Naive thymus-derived CD8-positive, alpha-beta T cell (primary cell): ENCODE measurements at regions of chr4 and their contacts with region 1.

Region 1: GRCh38 chr4:6709230-6710114 is at the start of gene MRFAP1L1:
- DNase-seq: peak; percentile 95 to 98 (median 97)
- ATAC-seq: peak; percentile 82 to 87
- H3K4me3 Mint-ChIP-seq: peak within 1 kb of the TSS; percentile 97 to 100 (median 99)
- H3K27ac Mint-ChIP-seq: peak within 1 kb of the TSS; percentile 95 to 100 (median 99)
- H3K4me1 Mint-ChIP-seq: peaks cover 37 to 71% (median 66%) of the 10 kb centered on the region in 4 donors
- H3K27me3 Mint-ChIP-seq: no peaks in the 10 kb centered on the region
- polyA plus RNA-seq, gene MRFAP1L1: 102 to 124 (median 105) TPM

Region 2: DNA sequence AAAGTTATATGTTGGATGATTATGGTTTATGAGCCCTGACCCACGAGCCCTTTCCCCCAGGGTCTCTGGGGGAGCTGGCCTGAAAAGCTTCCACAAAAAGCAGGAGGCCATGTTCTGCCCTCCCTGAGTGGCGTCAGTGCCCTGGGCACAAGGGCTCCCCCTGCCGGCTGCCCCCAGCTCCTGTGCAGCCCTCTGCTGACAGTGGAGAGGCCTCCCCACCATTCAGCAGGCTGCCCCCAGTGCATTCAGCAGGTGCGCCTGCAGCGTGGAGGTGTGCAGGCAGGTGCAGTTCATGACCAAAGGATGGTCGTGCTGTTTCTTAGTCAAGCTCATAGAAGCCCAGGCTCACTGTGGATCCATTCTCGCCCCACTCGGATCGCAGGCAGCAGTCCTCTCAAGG is 28.3 kb before region 1 on chr4:
- POLR2A ChIA-PET with region 1: interaction called, 437 read pairs
- DNase-seq: no peak
- ATAC-seq: no peak
- H3K4me3 Mint-ChIP-seq: no peak overlapping the region
- H3K27ac Mint-ChIP-seq: peak overlapping the region in 5 of 10 donors; percentile 38 to 83 (median 63)
- H3K4me1 Mint-ChIP-seq: peaks cover 18 to 58% (median 38%) of the 10 kb centered on the region in 4 donors
- H3K27me3 Mint-ChIP-seq: no peaks in the 10 kb centered on the region

Region 3: GRCh38 chr4:6688879-6689505 is 20.5 kb before region 1 on chr4:
- POLR2A ChIA-PET with region 1: interaction called, 103 read pairs
- DNase-seq: peak; percentile 39 to 86 (median 60)
- ATAC-seq: peak; percentile 76 to 90
- H3K4me3 Mint-ChIP-seq: peak overlapping the region; percentile 73 to 95 (median 84)
- H3K27ac Mint-ChIP-seq: peak overlapping the region; percentile 88 to 99 (median 97)
- H3K4me1 Mint-ChIP-seq: peaks cover 39 to 78% (median 70%) of the 10 kb centered on the region in 4 donors
- H3K27me3 Mint-ChIP-seq: no peaks in the 10 kb centered on the region

Region 4: DNA sequence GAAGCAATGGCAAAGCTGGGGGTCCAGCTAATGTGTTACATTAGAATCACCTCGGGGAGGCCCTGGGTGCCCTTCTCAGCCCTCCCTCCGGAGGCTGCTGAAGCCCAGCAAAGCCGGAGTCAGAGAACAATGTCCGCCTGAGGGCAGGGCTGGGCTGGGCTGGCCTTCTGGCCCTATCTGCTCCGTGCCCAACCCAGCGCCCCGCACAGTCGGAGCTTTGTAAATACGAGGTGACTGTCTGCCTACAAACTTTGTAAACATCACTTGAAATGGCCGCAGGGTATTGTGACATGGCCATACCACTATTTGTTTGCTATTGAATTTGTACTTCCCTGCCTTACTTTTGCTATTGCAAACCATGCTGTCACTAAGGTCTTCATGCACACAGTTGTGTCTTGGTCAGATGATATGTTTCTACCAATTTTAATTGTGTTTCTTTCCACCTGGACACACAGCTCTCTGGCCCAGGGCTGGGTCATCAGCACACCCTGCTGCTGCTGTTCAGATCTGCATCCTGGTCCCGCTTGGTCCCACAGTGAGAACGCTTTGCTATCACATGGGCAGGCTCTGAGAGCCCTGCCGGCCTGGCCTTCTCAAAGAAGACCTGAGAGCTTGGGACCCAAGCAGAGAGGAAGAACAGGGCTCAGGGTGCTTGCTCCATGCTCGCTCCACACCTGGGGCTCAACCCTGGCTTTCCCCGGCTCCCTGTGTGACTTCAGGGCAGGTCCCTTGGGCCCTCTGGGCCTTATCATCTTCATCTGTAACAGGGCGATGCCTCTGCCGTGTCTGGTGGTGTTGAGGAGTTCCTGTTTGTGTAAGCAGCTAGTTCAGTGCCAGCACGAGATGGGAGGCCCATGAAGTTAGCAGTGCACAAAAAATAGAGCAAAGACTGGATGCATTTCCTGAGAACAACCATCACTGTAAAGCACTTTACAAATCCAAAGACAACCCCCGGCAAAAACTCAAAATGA is 13.5 kb before region 1 on chr4:
- POLR2A ChIA-PET with region 1: interaction called, 103 read pairs
- DNase-seq: peak in 9 of 10 donors; percentile 27 to 81 (median 55)
- ATAC-seq: peak; percentile 86 to 90
- H3K4me3 Mint-ChIP-seq: peak overlapping the region; percentile 40 to 85 (median 74)
- H3K27ac Mint-ChIP-seq: peak overlapping the region; percentile 90 to 98 (median 94)
- H3K4me1 Mint-ChIP-seq: peaks cover 49 to 87% (median 82%) of the 10 kb centered on the region in 4 donors
- H3K27me3 Mint-ChIP-seq: no peaks in the 10 kb centered on the region

Region 5: DNA sequence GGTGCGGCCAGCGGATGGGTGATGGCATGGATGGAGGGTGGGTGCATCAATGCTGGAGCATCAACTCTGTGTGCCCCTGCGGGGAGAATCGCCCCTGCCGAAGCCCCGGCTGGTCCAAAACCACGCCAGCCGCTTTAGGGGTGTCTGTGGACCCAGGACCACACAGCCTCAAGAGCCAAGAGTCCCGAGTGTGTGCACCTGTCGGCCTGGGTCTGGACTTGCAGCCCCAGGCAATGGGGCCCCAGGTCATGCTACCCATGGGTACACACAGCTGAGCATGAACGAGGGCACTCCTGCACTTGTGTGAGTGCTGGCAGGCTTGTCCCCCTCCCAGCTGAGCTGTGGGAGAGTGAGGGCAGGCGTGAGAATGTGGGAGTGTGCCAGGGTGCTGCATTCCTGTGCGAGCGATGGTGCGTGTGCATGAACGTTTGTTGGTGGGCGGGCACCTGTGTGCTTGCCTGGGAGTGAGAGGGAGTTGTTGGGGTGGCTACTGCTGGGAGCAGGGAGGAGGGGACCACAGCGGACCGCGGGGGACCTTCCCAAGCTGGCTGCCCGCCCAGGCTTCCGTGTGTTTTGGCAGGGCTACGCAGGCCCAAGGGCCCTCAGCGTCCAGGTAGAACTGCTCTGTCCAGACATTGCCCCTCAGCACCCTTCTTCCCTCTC is 37.3 kb after region 1 on chr4:
- POLR2A ChIA-PET with region 1: no interaction called
- DNase-seq: no peak
- ATAC-seq: no peak
- H3K4me3 Mint-ChIP-seq: no peak overlapping the region
- H3K27ac Mint-ChIP-seq: peak overlapping the region in 3 of 10 donors; percentile 34 to 53 (median 48)
- H3K4me1 Mint-ChIP-seq: peaks cover 2 to 14% (median 9%) of the 10 kb centered on the region in 4 donors
- H3K27me3 Mint-ChIP-seq: peaks cover 0 to 1% (median 0%) of the 10 kb centered on the region in 5 donors